ENCODE measurements at regions of chr3 and their contacts with region 1.

Region 1: GRCh38 chr3:54283470-54283869 is 161.1 kb downstream of the CACNA2D3 start:
- DNase-seq: no peak
- ATAC-seq: peak; percentile 96

Region 2: GRCh38 chr3:54138937-54139569 is 144.4 kb before region 1 on chr3:
- intact Hi-C with region 1: no loop called
- DNase-seq: no peak
- ATAC-seq: peak in 1 of 2 donors; percentile 59

Region 3: DNA sequence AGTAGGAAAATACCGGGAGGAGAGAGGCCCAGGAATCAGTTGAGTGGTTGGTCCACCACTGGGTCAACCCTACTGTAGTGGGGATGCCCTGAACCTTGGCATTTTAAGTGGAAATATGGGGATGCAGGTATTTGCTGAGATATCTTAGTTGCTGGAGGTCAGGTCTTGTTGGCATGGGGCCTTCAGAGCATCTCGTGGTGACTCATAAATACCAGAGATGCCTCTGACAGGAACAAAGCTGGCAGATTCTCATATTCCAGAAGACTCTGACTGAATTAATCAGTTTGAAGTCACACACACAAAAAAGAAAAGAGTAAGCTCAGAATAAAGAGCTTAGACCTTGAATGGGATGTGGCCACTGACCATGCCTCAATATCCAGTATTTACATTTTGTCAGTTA is 69.6 kb before region 1 on chr3:
- intact Hi-C with region 1: no loop called
- DNase-seq: peak; percentile 39
- ATAC-seq: peak; percentile 19 to 84

Region 4: DNA sequence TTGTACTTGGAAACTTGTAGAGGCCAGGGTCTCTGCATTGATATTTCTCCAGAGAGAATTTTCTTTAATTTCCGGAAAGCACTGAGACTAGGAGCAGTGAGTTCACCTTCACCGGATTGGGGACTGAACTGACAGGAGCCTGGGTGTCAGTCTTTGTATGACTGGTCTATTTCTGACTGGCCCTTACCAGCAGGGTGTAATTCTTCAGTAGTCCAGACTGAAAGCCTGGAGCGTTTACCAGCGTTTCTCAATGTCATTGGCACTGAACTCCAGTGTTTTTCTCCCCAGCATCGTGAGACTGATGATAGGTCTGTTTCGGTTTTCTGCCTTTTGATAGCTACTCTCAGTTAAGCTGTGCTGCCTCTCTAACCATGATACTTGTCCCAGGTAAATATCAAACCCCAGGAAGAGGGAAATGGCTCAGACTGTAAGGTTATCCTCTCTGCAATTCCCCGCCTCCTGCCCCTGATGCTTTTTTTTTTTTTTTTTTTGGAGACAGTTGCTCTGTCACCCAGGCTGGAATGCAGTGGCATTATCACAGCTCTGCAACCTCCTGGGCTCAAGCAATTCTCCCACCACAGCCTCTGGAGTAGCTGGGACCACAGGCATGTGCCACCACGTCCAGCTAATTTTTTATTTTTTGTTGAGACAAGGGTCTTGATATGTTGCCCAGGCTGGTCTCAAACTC is 57.5 kb before region 1 on chr3:
- intact Hi-C with region 1: loop called in 1 of 2 experiments (anchors 5 kb)
- DNase-seq: no peak
- ATAC-seq: peak; percentile 88 to 89

Region 5: DNA sequence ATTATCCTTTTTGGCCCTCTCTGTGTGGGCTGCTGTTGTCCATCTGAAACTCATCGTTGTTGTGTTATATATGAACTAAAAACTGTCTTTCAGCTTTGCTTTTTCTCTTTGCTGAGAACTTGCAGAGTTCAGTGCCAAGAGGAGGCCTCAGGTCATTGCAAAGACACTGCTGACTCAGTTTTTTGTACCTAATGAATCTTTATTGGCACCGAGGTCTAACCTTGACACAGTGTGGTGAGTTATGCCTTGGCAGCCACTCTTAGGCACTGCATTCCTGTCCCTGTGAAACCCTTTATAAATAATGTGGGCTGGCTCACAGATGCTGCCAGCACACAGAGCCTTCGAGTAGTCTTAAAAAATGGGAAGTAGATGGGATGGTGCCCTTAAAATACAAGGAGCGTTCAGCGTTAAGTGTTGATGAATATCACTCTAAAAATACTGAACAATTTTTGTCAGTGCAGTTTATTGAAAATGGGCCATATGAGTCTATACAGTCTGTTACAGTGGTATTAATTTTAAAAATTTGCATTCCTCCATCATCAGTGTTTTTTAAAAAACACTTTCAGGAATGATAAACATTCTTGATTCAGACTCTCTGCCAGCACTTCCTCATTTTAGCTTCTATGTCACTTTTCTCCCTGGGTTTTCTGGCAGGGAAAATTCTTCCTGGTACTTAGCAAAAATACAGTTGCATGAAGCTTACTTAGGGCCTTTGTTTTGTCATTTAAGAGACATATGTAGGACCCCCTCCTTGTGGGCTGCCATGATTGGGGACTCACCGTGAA is 73.0 kb after region 1 on chr3:
- intact Hi-C with region 1: loop called in 1 of 2 experiments (anchors 5 kb)
- DNase-seq: peak; percentile 42
- ATAC-seq: peak; percentile 79 to 82